ENCODE measurements at regions of chr12 and their contacts with region 1.

Region 1: DNA sequence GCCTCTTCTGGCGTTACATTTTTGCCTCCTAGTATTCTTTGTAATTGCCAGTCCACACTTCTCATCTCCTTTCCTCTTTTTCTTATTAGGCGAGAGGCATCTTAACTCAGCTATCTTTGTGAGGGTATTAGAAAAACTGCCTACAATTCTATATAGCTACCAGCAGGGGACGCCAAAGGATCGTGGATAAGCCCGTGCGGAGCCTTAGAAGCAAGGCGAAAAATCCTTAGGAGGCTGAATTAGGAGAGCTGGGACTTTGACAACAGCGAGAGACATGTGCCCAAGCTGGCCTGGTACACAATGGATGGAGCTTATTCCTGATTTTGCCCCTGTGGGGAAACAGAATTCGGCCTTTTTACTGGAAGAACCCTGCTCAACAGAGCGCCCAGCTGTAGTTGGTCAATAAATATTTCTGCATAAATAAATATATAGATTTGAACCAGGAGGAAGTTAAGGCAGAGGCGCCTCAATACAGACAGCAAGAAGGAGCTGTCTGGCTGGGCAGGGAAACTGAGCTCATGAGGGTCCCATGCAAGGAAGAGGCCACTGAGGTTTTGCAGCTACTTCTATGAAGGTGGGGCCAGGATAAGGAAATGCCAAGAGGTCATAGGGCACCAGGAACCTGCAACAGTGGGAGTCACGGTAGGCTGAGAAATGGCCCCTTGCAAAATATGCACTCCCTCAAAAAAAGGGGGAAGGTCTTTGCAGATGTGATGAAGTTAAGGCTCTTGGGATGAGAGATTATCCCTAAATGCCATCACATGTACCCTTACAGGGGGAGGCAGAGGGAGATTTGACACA is 14.6 kb upstream of the RBM19 start:
- DNase-seq: peak; percentile 75
- H3K4me3 ChIP-seq: no peak overlapping the region
- H3K27ac ChIP-seq: no peak overlapping the region
- H3K4me1 ChIP-seq: no peaks in the 10 kb centered on the region
- H3K27me3 ChIP-seq: no peaks in the 10 kb centered on the region
- CTCF ChIP-seq: peak; percentile 92

Region 2: GRCh38 chr12:113912760-113913329 is 67.9 kb before region 1 on chr12:
- CTCF ChIA-PET with region 1: no interaction called
- POLR2A ChIA-PET with region 1: interaction called, 20 read pairs
- intact Hi-C with region 1: no loop called
- DNase-seq: peak; percentile 67
- H3K4me3 ChIP-seq: no peak overlapping the region
- H3K27ac ChIP-seq: no peak overlapping the region
- H3K4me1 ChIP-seq: no peaks in the 10 kb centered on the region
- H3K27me3 ChIP-seq: no peaks in the 10 kb centered on the region
- CTCF ChIP-seq: peak; percentile 96

Region 3: GRCh38 chr12:114508529-114509129 is 527.9 kb after region 1 on chr12:
- CTCF ChIA-PET with region 1: interaction called, 22 read pairs
- POLR2A ChIA-PET with region 1: interaction called, 3 read pairs
- intact Hi-C with region 1: loop called (anchors 1 kb)
- DNase-seq: peak; percentile 70
- H3K4me3 ChIP-seq: no peak overlapping the region
- H3K27ac ChIP-seq: no peak overlapping the region
- H3K4me1 ChIP-seq: no peaks in the 10 kb centered on the region
- H3K27me3 ChIP-seq: peaks cover 6% of the 10 kb centered on the region
- CTCF ChIP-seq: peak; percentile 76

Region 4: DNA sequence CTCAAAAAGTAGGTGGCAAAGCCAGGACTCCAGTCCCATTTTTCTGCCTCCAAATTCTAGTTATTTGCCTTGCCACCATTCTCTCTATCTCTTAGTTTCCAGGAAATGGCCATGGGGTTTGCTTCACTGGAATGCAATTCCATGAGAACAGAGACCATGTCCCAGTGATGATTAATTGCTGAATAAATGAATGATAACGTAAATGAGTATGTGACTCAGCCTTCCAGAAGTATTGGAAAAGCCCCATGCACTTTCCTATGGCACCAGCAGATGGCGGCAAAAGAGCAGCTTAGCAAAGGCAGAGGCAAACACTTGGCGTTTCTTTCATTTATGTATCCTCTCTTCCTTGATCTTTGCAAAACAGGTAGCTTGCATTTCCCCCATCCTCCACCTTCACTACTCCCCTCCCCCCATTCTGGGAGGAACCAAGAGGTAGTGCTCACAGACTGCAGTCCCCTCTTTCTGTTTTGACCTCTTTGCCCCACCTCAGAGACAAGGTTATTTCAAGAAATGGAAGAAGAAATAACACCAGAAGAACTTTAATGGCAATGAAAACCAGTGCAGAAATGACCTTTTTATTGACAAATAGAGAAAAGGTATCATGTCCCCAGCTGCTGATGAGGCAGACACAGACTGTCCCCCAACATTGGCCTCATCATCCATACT is 681.9 kb after region 1 on chr12:
- CTCF ChIA-PET with region 1: no interaction called
- POLR2A ChIA-PET with region 1: no interaction called
- intact Hi-C with region 1: loop called (anchors 10 kb)
- DNase-seq: peak; percentile 72
- H3K4me3 ChIP-seq: no peak overlapping the region
- H3K27ac ChIP-seq: no peak overlapping the region
- H3K4me1 ChIP-seq: no peaks in the 10 kb centered on the region
- H3K27me3 ChIP-seq: peaks cover under 1% of the 10 kb centered on the region
- CTCF ChIP-seq: peak; percentile 81

Region 5: GRCh38 chr12:115916910-115917668 is 1936.4 kb after region 1 on chr12:
- CTCF ChIA-PET with region 1: interaction called, 3 read pairs
- POLR2A ChIA-PET with region 1: no interaction called
- intact Hi-C with region 1: loop called (anchors 5 kb)
- DNase-seq: peak; percentile 27
- H3K4me3 ChIP-seq: no peak overlapping the region
- H3K27ac ChIP-seq: no peak overlapping the region
- H3K4me1 ChIP-seq: no peaks in the 10 kb centered on the region
- H3K27me3 ChIP-seq: no peaks in the 10 kb centered on the region
- CTCF ChIP-seq: peak; percentile 84

Measured in A673 (cell line).